Activated T-helper 1 cell treated with anti-CD3 and anti-CD28 coated beads, Interleukin-12 subunit alpha, Interleukin-12 subunit beta, Interleukin-2, Interleukin-4 antibody, amounts not matched to agents 30 ng/mL and 10 ng/mL and 1 ng/mL, durations not matched to agents 14 hours and 24 hours and 36 hours (primary cell): ENCODE measurements at regions of chr10 and their contacts with region 1.

Region 1: GRCh38 chr10:33365871-33366411 is 31.5 kb upstream of the NRP1 start:
- DNase-seq: no peak
- H3K4me3 Mint-ChIP-seq: no peak overlapping the region
- H3K27ac Mint-ChIP-seq: peak overlapping the region; percentile 61
- H3K4me1 Mint-ChIP-seq: peaks cover 16% of the 10 kb centered on the region
- H3K27me3 Mint-ChIP-seq: no peaks in the 10 kb centered on the region

Region 2: GRCh38 chr10:32582946-32583345 is 783.0 kb before region 1 on chr10:
- intact Hi-C with region 1: no loop called
- DNase-seq: no peak
- H3K4me3 Mint-ChIP-seq: no peak overlapping the region
- H3K27ac Mint-ChIP-seq: no peak overlapping the region
- H3K4me1 Mint-ChIP-seq: no peaks in the 10 kb centered on the region
- H3K27me3 Mint-ChIP-seq: no peaks in the 10 kb centered on the region

Region 3: DNA sequence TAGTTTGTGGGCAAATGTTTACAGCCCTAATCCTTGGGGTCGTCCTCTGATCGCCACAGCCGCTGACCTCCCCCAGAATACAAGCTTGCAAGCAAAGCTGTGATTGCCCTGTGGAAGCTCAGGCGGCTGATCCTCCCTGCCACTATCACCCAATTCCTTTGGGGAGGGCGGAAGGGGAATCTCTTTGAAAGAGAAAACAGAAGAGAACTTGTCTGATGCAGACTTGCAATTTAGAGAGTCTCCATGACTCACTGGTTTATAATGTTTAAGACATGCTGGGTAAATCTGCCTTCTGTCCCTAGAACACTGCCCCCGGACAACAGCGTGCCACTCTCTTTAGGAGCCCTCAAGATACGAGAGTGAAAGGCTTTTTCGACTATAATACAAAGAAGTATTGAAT is 107.0 kb before region 1 on chr10:
- intact Hi-C with region 1: loop called (anchors 5 kb)
- DNase-seq: no peak
- H3K4me3 Mint-ChIP-seq: no peak overlapping the region
- H3K27ac Mint-ChIP-seq: no peak overlapping the region
- H3K4me1 Mint-ChIP-seq: peaks cover 7% of the 10 kb centered on the region
- H3K27me3 Mint-ChIP-seq: peaks cover 26% of the 10 kb centered on the region

Region 4: GRCh38 chr10:33376976-33377657 is 11.2 kb after region 1 on chr10:
- intact Hi-C with region 1: loop called (anchors 1 kb)
- DNase-seq: no peak
- H3K4me3 Mint-ChIP-seq: no peak overlapping the region
- H3K27ac Mint-ChIP-seq: no peak overlapping the region
- H3K4me1 Mint-ChIP-seq: no peaks in the 10 kb centered on the region
- H3K27me3 Mint-ChIP-seq: peaks cover 3% of the 10 kb centered on the region

Region 5: DNA sequence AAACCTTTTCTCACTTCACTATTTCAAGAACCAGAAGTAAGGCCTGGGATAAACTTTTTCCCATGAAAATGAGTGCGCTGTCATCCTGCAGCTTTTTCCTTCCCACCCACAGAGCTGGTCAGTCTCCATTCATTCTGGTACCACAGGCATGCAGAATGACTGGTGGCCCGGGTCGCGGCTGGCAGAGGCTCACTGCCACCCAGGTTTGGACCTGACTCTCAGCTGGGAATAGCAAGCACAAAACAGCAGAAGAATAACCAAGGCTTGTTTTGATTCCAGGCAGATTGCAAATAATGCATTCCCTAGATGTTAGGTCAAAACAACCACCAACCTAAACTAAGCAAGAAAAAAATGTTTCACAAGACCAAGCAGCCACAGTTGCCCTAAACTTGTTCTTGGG is 159.0 kb after region 1 on chr10:
- intact Hi-C with region 1: no loop called
- DNase-seq: no peak
- H3K4me3 Mint-ChIP-seq: no peak overlapping the region
- H3K27ac Mint-ChIP-seq: no peak overlapping the region
- H3K4me1 Mint-ChIP-seq: no peaks in the 10 kb centered on the region
- H3K27me3 Mint-ChIP-seq: peaks cover 3% of the 10 kb centered on the region